PC-3 (cell line): ENCODE measurements at regions of chr2 and their contacts with region 1.

Region 1: DNA sequence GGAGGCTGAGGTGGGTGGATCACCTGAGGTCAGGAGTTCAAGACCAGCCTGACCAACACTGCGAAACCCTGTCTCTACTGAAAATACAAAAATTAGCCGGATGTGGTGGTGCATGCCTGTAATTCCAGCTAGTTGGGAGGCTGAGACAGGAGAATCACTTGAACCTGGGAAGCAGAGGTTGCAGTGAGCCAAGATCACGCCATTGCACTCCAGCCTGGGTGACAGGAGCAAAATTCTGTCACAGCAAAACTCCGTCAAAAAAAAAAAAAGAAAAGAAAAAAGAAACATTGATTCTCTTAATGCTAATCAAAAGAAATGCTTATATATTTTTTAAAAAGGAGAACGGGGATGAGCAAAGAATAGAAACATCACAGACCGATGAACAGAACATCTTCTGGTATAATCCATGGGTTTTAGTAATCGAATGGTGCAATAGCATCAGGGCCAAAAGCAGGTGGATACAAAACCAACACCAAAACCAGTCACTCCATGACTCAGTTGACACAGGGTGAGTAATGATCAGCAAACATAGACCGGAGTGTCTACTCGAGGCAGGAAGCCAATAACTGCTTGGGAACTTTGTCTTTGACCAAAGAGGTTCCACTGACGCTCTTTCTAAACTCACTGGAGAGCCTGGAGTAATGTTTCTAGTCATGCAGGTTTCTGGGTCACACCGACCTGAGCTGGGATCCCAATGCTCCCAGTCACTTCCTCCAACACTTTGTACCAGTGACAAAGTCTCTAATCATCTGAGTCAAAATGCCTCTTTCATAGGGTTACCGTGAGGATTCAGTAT is 31.1 kb downstream of the MREG start:
- DNase-seq: peak; percentile 100
- ATAC-seq: peak; percentile 98
- H3K4me3 ChIP-seq: no peak overlapping the region; the same call in 1 of the 2 replicates
- H3K27ac ChIP-seq: peak overlapping the region; percentile 98
- H3K4me1 ChIP-seq: peaks cover 42% of the 10 kb centered on the region
- H3K27me3 ChIP-seq: no peaks in the 10 kb centered on the region
- CTCF ChIP-seq: no peak

Region 2: DNA sequence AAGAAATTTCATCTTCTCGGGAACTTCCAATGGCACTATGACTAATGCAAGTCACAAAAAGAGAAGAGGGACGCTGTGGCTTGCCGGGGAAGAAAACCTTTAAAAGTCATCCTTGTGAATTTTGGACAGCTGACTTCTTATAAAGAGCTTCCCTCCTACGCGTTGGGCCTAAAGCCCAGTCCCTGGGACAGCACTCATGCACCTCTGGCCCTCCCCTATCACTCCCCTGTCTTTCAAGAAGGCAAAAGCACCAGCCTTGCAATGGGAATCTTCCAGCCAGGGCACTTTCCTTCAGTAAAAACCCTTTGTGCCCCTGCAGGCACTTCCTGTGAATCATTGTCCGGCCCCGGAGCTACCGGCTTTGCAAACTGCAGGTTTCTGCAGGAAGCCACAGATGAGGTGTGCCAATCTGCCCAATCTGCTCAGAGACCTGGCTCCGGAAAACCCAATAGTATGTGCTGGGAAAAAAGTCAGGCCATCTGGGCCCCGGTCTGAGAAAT is 23.9 kb after region 1 on chr2:
- CTCF ChIA-PET with region 1: interaction called, 4 read pairs
- POLR2A ChIA-PET with region 1: no interaction called
- intact Hi-C with region 1: loop called (anchors 1 kb)
- DNase-seq: peak; percentile 98
- ATAC-seq: peak; percentile 92
- H3K4me3 ChIP-seq: peak overlapping the region; percentile 44
- H3K27ac ChIP-seq: peak overlapping the region; percentile 98
- H3K4me1 ChIP-seq: peaks cover 46% of the 10 kb centered on the region
- H3K27me3 ChIP-seq: no peaks in the 10 kb centered on the region
- CTCF ChIP-seq: no peak

Region 3: DNA sequence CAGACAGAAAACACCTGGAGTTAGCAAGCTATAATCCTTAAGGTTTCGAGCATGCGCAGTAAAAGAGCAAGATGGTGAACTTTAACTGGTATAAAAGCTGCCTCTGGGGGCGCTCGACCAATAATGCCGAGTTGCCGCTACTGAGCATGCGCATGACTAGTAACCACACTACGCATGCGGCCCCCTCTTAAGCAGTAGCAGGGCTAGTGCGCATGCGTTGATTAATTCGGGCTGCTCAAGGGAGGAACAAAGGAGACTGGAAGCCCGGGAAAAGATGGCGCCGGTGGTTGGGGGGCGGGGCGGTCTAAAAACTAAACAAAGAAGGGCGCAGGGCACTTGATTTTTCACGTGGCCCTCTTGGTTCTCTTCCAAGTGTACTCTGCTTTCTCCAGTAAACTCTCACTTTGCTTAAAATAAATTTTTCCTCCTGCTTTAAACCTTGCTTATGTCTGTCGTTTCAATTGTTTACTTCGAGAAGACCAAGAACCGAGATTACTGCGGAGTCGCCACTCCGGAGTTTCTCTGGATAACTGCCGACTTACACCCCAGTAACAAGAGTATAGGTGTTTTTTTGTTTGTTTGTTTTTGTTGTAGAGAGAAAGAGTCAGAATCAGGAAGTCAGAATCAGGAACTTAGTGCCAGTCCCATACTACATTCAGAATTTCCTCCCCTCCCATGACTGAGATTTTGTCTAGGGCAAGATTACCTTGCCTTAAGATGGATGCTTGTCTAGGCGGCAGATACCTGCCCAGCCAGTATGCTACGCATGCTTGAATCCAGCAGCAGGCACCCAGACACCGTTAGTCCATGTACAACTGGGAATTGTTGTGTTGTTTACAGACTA is 132.7 kb after region 1 on chr2:
- CTCF ChIA-PET with region 1: no interaction called
- POLR2A ChIA-PET with region 1: no interaction called
- intact Hi-C with region 1: no loop called
- DNase-seq: peak; percentile 99
- ATAC-seq: peak; percentile 94
- H3K4me3 ChIP-seq: peak overlapping the region; percentile 72
- H3K27ac ChIP-seq: peak overlapping the region; percentile 76
- H3K4me1 ChIP-seq: peaks cover 39% of the 10 kb centered on the region
- H3K27me3 ChIP-seq: no peaks in the 10 kb centered on the region
- CTCF ChIP-seq: peak; percentile 90